GM12878 (cell line): ENCODE measurements at regions of chr20 and their contacts with region 1.

Region 1: GRCh38 chr20:33992923-33993575 is 662 bp upstream of the RALY start:
- DNase-seq: peak; percentile 93
- ATAC-seq: peak; percentile 85
- H3K4me3 ChIP-seq: peak overlapping the region; percentile 87
- H3K27ac ChIP-seq: peak overlapping the region; percentile 96
- H3K4me1 ChIP-seq: peaks cover 12% of the 10 kb centered on the region
- H3K27me3 ChIP-seq: no peaks in the 10 kb centered on the region
- CTCF ChIP-seq: no peak
- EP300 ChIP-seq: no peak
- POLR2A ChIP-seq: peak; percentile 90
- RAD21 ChIP-seq: no peak

Region 2: DNA sequence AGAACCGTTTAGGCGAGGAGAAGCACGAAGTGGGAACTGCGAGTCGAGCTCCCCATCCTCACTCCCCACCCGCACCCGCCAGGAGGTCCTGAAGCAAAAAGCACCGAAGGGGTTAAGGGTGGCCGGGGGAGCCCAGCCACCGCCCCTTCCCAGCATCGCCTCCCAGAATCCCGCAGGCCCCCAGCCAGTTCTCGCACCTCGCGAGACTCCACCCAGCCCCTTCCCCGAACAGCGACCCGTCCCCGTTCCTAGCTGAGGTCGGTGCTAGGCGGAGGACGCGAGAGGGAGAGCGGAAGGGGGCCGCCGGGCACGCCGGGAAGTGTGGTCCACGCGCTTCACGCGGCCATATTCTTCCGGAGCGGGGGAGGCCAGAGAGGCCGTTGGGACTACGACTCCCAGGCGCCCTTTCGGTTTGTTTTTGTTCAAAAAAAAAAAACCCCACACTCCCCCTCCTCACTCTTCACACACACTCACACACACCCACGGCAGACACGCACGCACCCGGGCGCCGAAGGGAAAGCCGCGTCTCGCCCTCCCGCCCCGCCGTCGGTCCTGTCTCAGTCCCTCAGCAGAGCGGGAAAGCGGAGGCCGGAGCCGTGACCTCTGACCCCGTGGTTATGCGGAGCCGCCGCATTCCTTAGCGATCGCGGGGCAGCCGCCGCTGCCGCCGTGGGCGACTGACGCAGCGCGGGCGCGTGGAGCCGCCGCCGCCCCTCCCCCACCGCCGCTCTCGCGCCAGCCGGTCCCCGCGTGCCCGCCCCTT is 1635.0 kb before region 1 on chr20 and contains the start of gene ASXL1:
- CTCF ChIA-PET with region 1: no interaction called
- POLR2A ChIA-PET with region 1: no interaction called
- RAD21 ChIA-PET with region 1: no interaction called
- SMC1A ChIA-PET with region 1: no interaction called
- in situ Hi-C with region 1: no loop called
- intact Hi-C with region 1: loop called (anchors 5 kb)
- DNase-seq: peak; percentile 90
- ATAC-seq: peak; percentile 85
- H3K4me3 ChIP-seq: peak within 1 kb of the TSS; percentile 77
- H3K27ac ChIP-seq: peak within 1 kb of the TSS; percentile 91
- H3K4me1 ChIP-seq: peaks cover 29% of the 10 kb centered on the region
- H3K27me3 ChIP-seq: no peaks in the 10 kb centered on the region
- CTCF ChIP-seq: no peak
- EP300 ChIP-seq: no peak
- POLR2A ChIP-seq: peak; percentile 79
- RAD21 ChIP-seq: 0 out of 2 replicates have a peak, but pooled peaks have one; percentile 7
- polyA plus RNA-seq, gene ASXL1: 11.0 to 14.8 TPM

Region 3: DNA sequence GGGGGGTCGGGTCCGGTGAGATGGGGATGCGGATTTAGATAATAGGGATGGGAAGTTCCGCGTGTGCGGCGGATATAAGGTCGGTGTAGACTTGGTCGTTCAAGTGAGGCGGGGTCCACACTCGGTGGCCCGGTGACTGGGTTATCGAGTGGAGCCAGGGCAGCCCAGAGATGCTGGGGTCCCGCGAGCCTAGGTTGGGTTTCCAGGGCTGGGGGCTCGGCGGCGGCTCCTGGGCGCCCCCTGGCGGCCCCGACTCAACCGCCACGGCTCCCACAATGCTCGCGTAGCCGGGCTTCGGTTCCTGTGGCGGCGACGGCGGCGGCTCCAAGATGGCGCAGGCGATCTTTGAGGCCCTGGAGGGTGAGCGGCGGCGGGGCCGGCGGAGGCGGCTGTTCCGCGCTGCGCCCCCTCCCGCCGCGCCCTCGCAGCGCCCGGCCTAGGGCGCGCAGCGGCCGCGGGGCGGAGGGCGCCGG is 261.3 kb before region 1 on chr20 and contains the start of gene ZNF341:
- CTCF ChIA-PET with region 1: no interaction called
- POLR2A ChIA-PET with region 1: no interaction called
- RAD21 ChIA-PET with region 1: no interaction called
- SMC1A ChIA-PET with region 1: no interaction called
- in situ Hi-C with region 1: no loop called
- intact Hi-C with region 1: loop called (anchors 5 kb)
- DNase-seq: peak; percentile 16
- ATAC-seq: peak; percentile 83
- H3K4me3 ChIP-seq: peak within 1 kb of the TSS; percentile 82
- H3K27ac ChIP-seq: peak within 1 kb of the TSS; percentile 77
- H3K4me1 ChIP-seq: peaks cover 7% of the 10 kb centered on the region
- H3K27me3 ChIP-seq: no peaks in the 10 kb centered on the region
- CTCF ChIP-seq: peak; percentile 79 to 89 (median 84)
- EP300 ChIP-seq: no peak
- POLR2A ChIP-seq: peak; percentile 57; the same call in 1 of the 2 replicates
- RAD21 ChIP-seq: peak; percentile 56
- polyA plus RNA-seq, gene ZNF341: 0.18 to 0.46 TPM

Region 4: GRCh38 chr20:33883164-33883563 is 109.9 kb before region 1 on chr20:
- CTCF ChIA-PET with region 1: interaction called, 4 read pairs
- POLR2A ChIA-PET with region 1: no interaction called
- RAD21 ChIA-PET with region 1: no interaction called
- SMC1A ChIA-PET with region 1: no interaction called
- in situ Hi-C with region 1: no loop called
- intact Hi-C with region 1: loop called (anchors 2 kb)
- DNase-seq: peak; percentile 73
- ATAC-seq: peak; percentile 94
- H3K4me3 ChIP-seq: peak overlapping the region; percentile 19; the same call in 1 of the 2 replicates
- H3K27ac ChIP-seq: peak overlapping the region; percentile 86
- H3K4me1 ChIP-seq: peaks cover 39% of the 10 kb centered on the region
- H3K27me3 ChIP-seq: no peaks in the 10 kb centered on the region
- CTCF ChIP-seq: peak in 2 of 3 experiments; percentile 10 to 23; a peak in 3 of 6 replicates
- EP300 ChIP-seq: peak in 1 of 2 experiments; percentile 56; a peak in 2 of 4 replicates
- POLR2A ChIP-seq: no peak
- RAD21 ChIP-seq: peak; percentile 36; the same call in 1 of the 2 replicates

Region 5: DNA sequence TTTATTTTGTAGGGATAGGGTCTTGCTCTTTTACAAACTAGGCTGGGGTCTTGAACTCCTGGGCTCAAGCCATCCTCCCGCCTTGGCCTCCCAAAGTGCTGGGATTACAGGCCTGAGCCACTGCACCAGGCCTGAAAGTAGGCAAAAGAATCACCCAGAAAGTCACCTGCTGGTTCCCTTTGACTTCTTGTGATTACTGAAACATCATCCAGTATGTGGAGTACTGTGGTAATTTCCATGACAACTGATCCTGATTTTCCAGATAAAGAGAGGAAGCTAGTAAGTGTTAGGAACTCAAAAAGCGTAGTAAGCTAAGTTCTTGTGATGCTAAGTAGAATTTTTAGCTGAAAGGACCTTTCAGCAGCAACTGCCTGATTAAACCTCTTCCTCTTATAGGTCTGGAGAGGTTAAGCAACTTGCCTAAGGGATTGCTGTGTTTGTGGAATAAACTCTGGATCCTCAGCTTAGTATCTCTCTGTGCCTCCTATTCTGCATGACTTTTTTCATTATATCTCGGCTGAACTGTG is 17.4 kb after region 1 on chr20:
- CTCF ChIA-PET with region 1: interaction called, 3 read pairs
- POLR2A ChIA-PET with region 1: interaction called, 12 read pairs
- RAD21 ChIA-PET with region 1: interaction called, 4 read pairs
- SMC1A ChIA-PET with region 1: interaction called, 4 read pairs
- in situ Hi-C with region 1: no loop called
- intact Hi-C with region 1: no loop called
- DNase-seq: no peak
- ATAC-seq: no peak
- H3K4me3 ChIP-seq: no peak overlapping the region
- H3K27ac ChIP-seq: no peak overlapping the region
- H3K4me1 ChIP-seq: peaks cover 21% of the 10 kb centered on the region
- H3K27me3 ChIP-seq: no peaks in the 10 kb centered on the region
- CTCF ChIP-seq: no peak
- EP300 ChIP-seq: no peak
- POLR2A ChIP-seq: no peak
- RAD21 ChIP-seq: no peak

Region 6: GRCh38 chr20:34111702-34112599 is 118.9 kb after region 1 on chr20 and contains the start of gene EIF2S2:
- CTCF ChIA-PET with region 1: interaction called, 4 read pairs
- POLR2A ChIA-PET with region 1: interaction called, 25 read pairs
- RAD21 ChIA-PET with region 1: interaction called, 9 read pairs
- SMC1A ChIA-PET with region 1: interaction called, 7 read pairs
- in situ Hi-C with region 1: no loop called
- intact Hi-C with region 1: loop called (anchors 5 kb)
- DNase-seq: peak; percentile 95
- ATAC-seq: peak; percentile 93
- H3K4me3 ChIP-seq: peak within 1 kb of the TSS; percentile 84
- H3K27ac ChIP-seq: peak within 1 kb of the TSS; percentile 92
- H3K4me1 ChIP-seq: peaks cover 4% of the 10 kb centered on the region
- H3K27me3 ChIP-seq: no peaks in the 10 kb centered on the region
- CTCF ChIP-seq: no peak
- EP300 ChIP-seq: no peak
- POLR2A ChIP-seq: peak; percentile 97
- RAD21 ChIP-seq: no peak
- polyA plus RNA-seq, gene EIF2S2: 60.2 to 103 TPM

Region 7: DNA sequence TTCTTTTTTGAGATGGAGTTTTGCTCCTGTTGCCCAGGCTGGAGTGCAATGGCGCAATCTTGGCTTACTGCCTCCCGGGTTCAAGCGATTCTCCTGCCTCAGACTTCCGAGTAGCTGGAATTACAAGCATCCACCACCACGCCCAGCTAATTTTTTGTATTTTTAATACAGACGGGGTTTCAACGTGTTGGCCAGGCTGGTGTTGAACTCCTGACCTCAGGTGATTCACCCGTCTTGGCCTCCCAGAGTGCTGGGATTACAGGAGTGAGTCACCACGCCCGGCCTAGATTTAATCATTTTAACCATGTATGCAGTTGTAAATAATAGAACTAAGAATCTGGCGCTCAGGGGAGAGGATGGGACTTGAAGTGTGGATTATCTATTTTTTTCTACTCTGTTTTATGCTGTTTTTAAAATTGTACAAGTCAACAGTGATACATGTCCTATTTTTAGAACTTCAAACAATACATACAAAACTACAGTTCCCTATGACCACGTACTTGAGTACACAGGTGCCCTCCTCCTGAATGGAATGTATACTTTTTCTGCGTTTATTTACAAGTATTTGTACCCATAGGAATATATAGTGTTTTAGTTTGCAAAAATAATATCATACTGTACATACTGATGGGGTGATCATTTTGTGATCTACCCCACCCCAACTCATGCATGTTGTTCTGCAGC is 397.9 kb after region 1 on chr20:
- CTCF ChIA-PET with region 1: no interaction called
- POLR2A ChIA-PET with region 1: no interaction called
- RAD21 ChIA-PET with region 1: no interaction called
- SMC1A ChIA-PET with region 1: no interaction called
- in situ Hi-C with region 1: no loop called
- intact Hi-C with region 1: no loop called
- DNase-seq: no peak
- ATAC-seq: no peak
- H3K4me3 ChIP-seq: no peak overlapping the region
- H3K27ac ChIP-seq: no peak overlapping the region
- H3K4me1 ChIP-seq: peaks cover 18% of the 10 kb centered on the region
- H3K27me3 ChIP-seq: no peaks in the 10 kb centered on the region
- CTCF ChIP-seq: no peak
- EP300 ChIP-seq: no peak
- POLR2A ChIP-seq: no peak
- RAD21 ChIP-seq: no peak